Mammary epithelial cell (primary cell): ENCODE measurements at regions of chr6 and their contacts with region 1.

Region 1: GRCh38 chr6:11414176-11414963 is 123.2 kb upstream of the TMEM170B start:
- DNase-seq: peak; percentile 93
- H3K4me3 ChIP-seq: peak overlapping the region in 1 of 3 experiments; percentile 26
- H3K27ac ChIP-seq: peak overlapping the region; percentile 96
- H3K4me1 ChIP-seq: peaks cover 4% of the 10 kb centered on the region
- H3K27me3 ChIP-seq: no peaks in the 10 kb centered on the region
- CTCF ChIP-seq: no peak

Region 2: DNA sequence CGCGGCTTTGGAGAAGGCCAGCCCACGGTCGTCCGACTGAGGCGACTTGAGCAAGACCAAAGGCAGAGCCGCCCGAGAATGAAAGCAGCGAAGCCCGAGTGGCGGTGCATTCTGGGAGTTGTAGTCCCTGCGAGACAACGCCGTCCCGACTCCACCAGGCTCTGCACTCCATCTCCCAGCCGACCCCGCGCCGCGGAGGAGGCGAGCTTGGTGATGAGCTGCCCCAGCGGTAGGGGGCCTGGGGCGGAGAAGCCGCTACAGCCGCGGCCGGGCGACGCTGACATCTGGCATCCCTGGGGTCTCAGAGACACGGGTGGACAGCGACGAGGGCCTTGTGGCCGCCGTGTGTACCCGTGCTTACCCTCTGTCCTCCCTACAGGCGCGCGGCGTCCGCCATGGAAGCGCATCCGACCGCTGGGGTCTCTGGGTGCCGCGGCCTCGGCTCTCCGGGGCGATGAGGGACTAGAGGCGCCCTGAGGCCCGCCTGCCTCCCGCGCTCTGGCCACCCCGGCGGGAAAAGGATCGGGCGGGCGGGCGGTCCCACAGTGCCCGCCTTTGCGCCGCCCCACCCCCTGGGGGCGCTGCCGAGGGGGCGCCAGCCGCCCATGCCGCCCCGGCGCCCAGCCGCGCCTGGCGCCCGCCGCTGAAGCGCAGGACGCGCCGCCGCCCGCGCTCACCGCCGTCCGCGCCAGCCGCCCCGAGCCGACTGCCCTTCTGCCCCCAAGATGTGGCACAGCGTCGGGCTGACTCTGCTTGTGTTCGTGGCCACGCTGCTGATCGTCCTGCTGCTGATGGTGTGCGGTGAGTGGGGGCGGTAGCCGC is 320.6 kb before region 1 on chr6 and contains the start of gene SMIM13:
- CTCF ChIA-PET with region 1: no interaction called
- dilution Hi-C with region 1: no loop called
- in situ Hi-C with region 1: no loop called
- intact Hi-C with region 1: loop called (anchors 10 kb)
- DNase-seq: peak; percentile 95
- H3K4me3 ChIP-seq: peak within 1 kb of the TSS; percentile 81 to 100 (median 89)
- H3K27ac ChIP-seq: peak within 1 kb of the TSS; percentile 87
- H3K4me1 ChIP-seq: peaks cover 12% of the 10 kb centered on the region
- H3K27me3 ChIP-seq: no peaks in the 10 kb centered on the region
- CTCF ChIP-seq: peak; percentile 16 to 42
- total RNA-seq, gene SMIM13: 12.3 to 17.5 TPM

Region 3: GRCh38 chr6:11144393-11144851 is 269.9 kb before region 1 on chr6:
- CTCF ChIA-PET with region 1: no interaction called
- dilution Hi-C with region 1: no loop called
- in situ Hi-C with region 1: no loop called
- intact Hi-C with region 1: loop called (anchors 1 kb)
- DNase-seq: peak; percentile 70
- H3K4me3 ChIP-seq: no peak overlapping the region
- H3K27ac ChIP-seq: peak overlapping the region; percentile 79
- H3K4me1 ChIP-seq: peaks cover 46% of the 10 kb centered on the region
- H3K27me3 ChIP-seq: no peaks in the 10 kb centered on the region
- CTCF ChIP-seq: peak; percentile 94 to 96

Region 4: GRCh38 chr6:11172501-11173332 is 241.7 kb before region 1 on chr6:
- CTCF ChIA-PET with region 1: interaction called, 7 read pairs
- dilution Hi-C with region 1: no loop called
- in situ Hi-C with region 1: no loop called
- intact Hi-C with region 1: loop called (anchors 1 kb)
- DNase-seq: peak; percentile 32
- H3K4me3 ChIP-seq: no peak overlapping the region
- H3K27ac ChIP-seq: no peak overlapping the region
- H3K4me1 ChIP-seq: peaks cover 8% of the 10 kb centered on the region
- H3K27me3 ChIP-seq: no peaks in the 10 kb centered on the region
- CTCF ChIP-seq: peak; percentile 72 to 84

Region 5: GRCh38 chr6:11270030-11271027 is 144.0 kb before region 1 on chr6:
- CTCF ChIA-PET with region 1: interaction called, 12 read pairs
- dilution Hi-C with region 1: no loop called
- in situ Hi-C with region 1: no loop called
- intact Hi-C with region 1: no loop called
- DNase-seq: no peak
- H3K4me3 ChIP-seq: no peak overlapping the region
- H3K27ac ChIP-seq: no peak overlapping the region
- H3K4me1 ChIP-seq: no peaks in the 10 kb centered on the region
- H3K27me3 ChIP-seq: no peaks in the 10 kb centered on the region
- CTCF ChIP-seq: no peak

Region 6: DNA sequence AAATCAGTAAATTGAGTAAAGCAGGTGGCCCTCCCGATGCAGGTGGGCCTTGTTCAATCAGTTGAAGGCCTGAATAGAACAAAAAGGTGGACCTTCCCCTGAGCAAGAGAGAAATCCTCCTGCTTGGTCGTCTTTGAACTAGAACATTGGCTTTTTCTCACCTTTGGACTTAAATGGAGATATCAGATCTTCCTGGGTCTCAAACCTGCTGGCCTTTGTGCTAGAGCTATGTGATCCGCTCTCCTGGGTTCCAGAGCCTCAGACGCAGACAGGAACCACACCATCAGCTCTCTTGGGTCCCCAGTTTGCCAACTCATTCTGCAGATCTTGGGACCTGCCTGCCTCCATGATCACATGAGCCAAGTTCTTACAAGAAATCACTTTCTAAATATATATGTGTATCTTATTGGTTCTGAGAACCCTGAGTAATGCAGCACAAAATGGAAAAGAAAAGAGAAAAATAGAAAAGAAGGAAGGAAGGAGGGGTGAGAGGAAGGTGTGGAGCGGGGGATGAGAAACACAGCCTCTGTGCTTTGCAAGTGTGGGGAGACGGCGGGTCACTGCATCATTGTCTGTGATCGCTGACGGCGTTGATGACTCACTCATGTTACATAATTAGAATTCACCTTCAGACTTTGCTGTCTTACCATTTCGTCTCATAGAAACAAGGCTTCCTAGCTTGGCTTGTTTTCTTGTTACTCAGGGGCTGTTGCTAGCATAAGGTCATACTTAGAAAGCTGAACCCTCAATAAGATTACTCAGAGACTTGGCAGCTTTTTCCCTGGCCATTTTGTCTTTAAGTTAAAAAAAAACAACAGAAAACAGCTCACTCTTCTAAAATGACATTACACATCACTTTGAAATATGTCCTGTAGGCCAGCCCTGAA is 96.2 kb before region 1 on chr6:
- CTCF ChIA-PET with region 1: no interaction called
- dilution Hi-C with region 1: no loop called
- in situ Hi-C with region 1: no loop called
- intact Hi-C with region 1: loop called (anchors 2 kb)
- DNase-seq: peak; percentile 99
- H3K4me3 ChIP-seq: no peak overlapping the region
- H3K27ac ChIP-seq: peak overlapping the region; percentile 96
- H3K4me1 ChIP-seq: peaks cover 51% of the 10 kb centered on the region
- H3K27me3 ChIP-seq: no peaks in the 10 kb centered on the region
- CTCF ChIP-seq: no peak

Region 7: DNA sequence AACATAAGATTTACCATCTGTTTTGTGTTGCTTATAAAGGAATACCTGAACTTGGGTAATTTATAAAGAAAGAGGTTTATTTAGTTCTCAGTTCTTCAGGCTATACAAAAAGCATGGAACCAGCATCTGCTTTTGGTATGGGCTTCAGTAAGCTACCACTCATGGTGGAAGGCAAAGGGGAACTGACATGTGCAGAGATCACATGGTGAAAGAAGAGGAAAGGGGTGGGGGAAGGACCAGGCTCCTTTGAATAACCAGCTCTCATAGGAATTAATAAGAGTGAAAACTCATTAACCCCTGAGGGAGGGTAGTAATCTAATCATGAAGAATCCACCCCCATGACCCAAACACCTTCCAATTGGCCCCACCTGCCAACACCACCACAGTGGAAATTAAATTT is 33.7 kb after region 1 on chr6:
- CTCF ChIA-PET with region 1: no interaction called
- dilution Hi-C with region 1: no loop called
- in situ Hi-C with region 1: no loop called
- intact Hi-C with region 1: no loop called
- DNase-seq: no peak
- H3K4me3 ChIP-seq: no peak overlapping the region
- H3K27ac ChIP-seq: no peak overlapping the region
- H3K4me1 ChIP-seq: no peaks in the 10 kb centered on the region
- H3K27me3 ChIP-seq: no peaks in the 10 kb centered on the region
- CTCF ChIP-seq: no peak